ENCODE measurements at regions of chr6 and their contacts with region 1.

Region 1: DNA sequence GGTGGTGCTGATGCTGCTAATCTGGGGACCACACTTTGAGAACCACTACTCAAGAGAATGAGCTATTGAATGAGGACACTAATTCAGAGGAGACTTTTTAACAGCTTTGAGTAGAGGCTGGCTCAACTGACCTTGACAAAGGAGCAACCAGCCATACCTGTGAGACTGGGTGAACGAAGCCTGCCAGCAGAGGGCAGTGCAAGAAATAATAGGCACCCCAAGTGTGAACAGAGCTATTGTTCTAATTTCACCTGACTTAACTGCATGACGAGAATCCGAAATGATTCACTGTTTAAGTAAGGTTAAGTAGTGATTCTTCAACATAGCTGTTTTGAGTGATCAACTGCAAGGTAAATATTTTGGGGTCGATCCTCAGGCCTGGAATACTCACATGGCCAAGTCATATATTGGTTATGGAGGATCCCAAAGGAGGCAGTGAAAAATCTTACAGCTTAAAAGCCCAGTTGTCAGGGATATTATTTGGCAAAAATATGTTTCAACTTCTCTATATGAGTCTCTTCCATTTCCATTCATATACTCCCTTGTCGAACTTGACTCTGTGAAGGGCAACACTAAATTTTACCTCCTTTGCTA is 550.5 kb upstream of the MARCKS start:
- DNase-seq: peak; percentile 81
- H3K4me3 Mint-ChIP-seq: no peak overlapping the region
- H3K27ac Mint-ChIP-seq: no peak overlapping the region
- H3K4me1 Mint-ChIP-seq: no peaks in the 10 kb centered on the region
- H3K27me3 Mint-ChIP-seq: no peaks in the 10 kb centered on the region
- CTCF ChIP-seq: peak; percentile 77

Region 2: GRCh38 chr6:112879920-112880413 is 426.7 kb before region 1 on chr6:
- CTCF ChIA-PET with region 1: no interaction called
- intact Hi-C with region 1: loop called (anchors 5 kb)
- DNase-seq: peak; percentile 78
- H3K4me3 Mint-ChIP-seq: peak overlapping the region; percentile 60
- H3K27ac Mint-ChIP-seq: no peak overlapping the region
- H3K4me1 Mint-ChIP-seq: no peaks in the 10 kb centered on the region
- H3K27me3 Mint-ChIP-seq: no peaks in the 10 kb centered on the region
- CTCF ChIP-seq: peak; percentile 23

Region 3: GRCh38 chr6:113352029-113352801 is 45.6 kb after region 1 on chr6:
- CTCF ChIA-PET with region 1: interaction called, 7 read pairs
- intact Hi-C with region 1: loop called (anchors 2 kb)
- DNase-seq: peak; percentile 62
- H3K4me3 Mint-ChIP-seq: peak overlapping the region; percentile 12
- H3K27ac Mint-ChIP-seq: peak overlapping the region; percentile 46
- H3K4me1 Mint-ChIP-seq: peaks cover 63% of the 10 kb centered on the region
- H3K27me3 Mint-ChIP-seq: no peaks in the 10 kb centered on the region
- CTCF ChIP-seq: no peak

Region 4: GRCh38 chr6:113564371-113565161 is 257.9 kb after region 1 on chr6:
- CTCF ChIA-PET with region 1: interaction called, 6 read pairs
- intact Hi-C with region 1: loop called (anchors 10 kb)
- DNase-seq: no peak
- H3K4me3 Mint-ChIP-seq: no peak overlapping the region
- H3K27ac Mint-ChIP-seq: no peak overlapping the region
- H3K4me1 Mint-ChIP-seq: peaks cover 13% of the 10 kb centered on the region
- H3K27me3 Mint-ChIP-seq: no peaks in the 10 kb centered on the region
- CTCF ChIP-seq: no peak

Measured in Calu3 (cell line).